Aorta (tissue), 5 donors: ENCODE measurements at regions of chr12 and their contacts with region 1.

Region 1: GRCh38 chr12:110109037-110109836 is 14.9 kb upstream of the IFT81 start:
- DNase-seq: peak; percentile 88 to 89
- ATAC-seq: peak; percentile 92
- H3K4me3 ChIP-seq: no peak overlapping the region
- H3K27ac ChIP-seq: peak overlapping the region; percentile 60 to 98
- H3K4me1 ChIP-seq: peaks cover 0 to 2% of the 10 kb centered on the region in 2 donors
- H3K27me3 ChIP-seq: no peaks in the 10 kb centered on the region

Region 2: DNA sequence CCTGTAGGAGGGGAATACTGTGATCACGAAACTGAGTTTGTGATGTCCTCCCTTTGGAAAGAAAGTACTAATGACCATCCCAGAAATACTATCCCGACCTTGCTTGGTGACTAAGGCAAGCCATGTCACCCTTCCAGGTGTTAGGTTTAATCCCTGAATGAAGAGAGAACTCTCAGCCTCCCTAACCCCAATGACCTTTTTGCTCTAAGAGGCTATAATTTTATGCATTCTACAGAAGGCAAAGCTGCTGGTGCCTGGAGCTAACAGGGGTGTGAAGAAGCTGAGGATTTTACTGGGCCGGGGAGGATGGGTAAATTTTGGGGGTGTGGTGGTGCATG is 53.1 kb before region 1 on chr12:
- intact Hi-C with region 1: no loop called
- DNase-seq: no peak
- ATAC-seq: no peak
- H3K4me3 ChIP-seq: no peak overlapping the region
- H3K27ac ChIP-seq: no peak overlapping the region
- H3K4me1 ChIP-seq: no peaks in the 10 kb centered on the region
- H3K27me3 ChIP-seq: no peaks in the 10 kb centered on the region

Region 3: GRCh38 chr12:110124184-110124995 is 15.2 kb after region 1 on chr12 and contains the start of gene IFT81:
- intact Hi-C with region 1: loop called in 1 of 2 experiments (anchors 2 kb)
- DNase-seq: peak; percentile 97 to 99
- ATAC-seq: peak; percentile 97
- H3K4me3 ChIP-seq: peak within 1 kb of the TSS; percentile 24 to 67
- H3K27ac ChIP-seq: peak within 1 kb of the TSS in 1 of 2 donors; percentile 59
- H3K4me1 ChIP-seq: peaks cover 0 to 2% of the 10 kb centered on the region in 2 donors
- H3K27me3 ChIP-seq: no peaks in the 10 kb centered on the region
- total RNA-seq, gene IFT81: 11.4 to 14.1 TPM

Region 4: GRCh38 chr12:110180591-110181005 is 71.4 kb after region 1 on chr12:
- intact Hi-C with region 1: loop called in 1 of 2 experiments (anchors 5 kb)
- DNase-seq: no peak
- ATAC-seq: peak; percentile 63
- H3K4me3 ChIP-seq: no peak overlapping the region
- H3K27ac ChIP-seq: peak overlapping the region in 1 of 2 donors; percentile 76
- H3K4me1 ChIP-seq: peaks cover 0 to 9% of the 10 kb centered on the region in 2 donors
- H3K27me3 ChIP-seq: no peaks in the 10 kb centered on the region

Region 5: DNA sequence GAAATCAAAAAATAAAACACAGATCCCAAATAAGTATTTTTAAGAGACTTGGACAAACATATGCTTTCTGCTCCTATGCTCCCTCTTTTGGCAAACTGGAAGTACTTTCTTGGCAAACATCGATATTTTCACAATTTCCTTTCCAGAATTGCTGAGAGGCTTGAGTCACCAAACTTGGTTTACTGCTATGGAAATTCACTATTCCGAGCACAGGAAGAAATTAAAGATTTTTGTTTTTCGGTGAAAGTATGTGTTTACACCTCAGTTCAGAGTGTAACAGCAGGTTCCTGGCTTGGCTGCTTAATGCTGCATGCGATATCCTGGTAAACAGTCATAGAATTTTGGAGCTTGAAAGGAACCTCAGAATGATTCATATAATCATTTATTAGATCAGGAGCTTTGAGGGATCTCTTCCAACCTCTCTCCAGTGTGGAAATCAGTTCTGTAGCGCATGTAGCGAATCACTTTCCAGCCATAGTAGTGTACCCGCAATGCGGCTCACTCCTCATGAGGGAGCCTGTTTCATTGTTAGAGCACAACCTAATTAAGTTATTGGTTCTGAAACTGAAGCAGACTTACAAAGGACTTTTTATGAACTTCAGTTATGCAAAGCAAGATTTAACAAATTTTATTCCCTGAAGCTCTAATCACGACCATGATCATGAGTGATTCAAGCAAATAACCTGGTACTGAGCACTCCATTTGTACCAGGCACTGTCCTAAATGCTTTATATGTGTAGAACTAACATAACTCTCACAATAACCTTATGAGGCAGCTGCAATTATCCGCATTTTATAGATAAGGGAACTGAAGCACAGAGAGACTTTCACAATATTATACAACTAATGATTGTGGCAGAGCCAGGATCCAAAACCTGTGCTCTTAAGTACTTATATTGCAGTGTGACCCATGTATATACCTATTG is 115.4 kb after region 1 on chr12:
- intact Hi-C with region 1: loop called in 1 of 2 experiments (anchors 5 kb)
- DNase-seq: no peak
- ATAC-seq: peak; percentile 87
- H3K4me3 ChIP-seq: peak overlapping the region in 1 of 2 donors; percentile 64
- H3K27ac ChIP-seq: peak overlapping the region; percentile 39 to 82
- H3K4me1 ChIP-seq: peaks cover 3 to 9% of the 10 kb centered on the region in 2 donors
- H3K27me3 ChIP-seq: no peaks in the 10 kb centered on the region

Region 6: GRCh38 chr12:110280779-110281548 is 171.7 kb after region 1 on chr12 and contains the start of gene ATP2A2:
- intact Hi-C with region 1: loop called in 1 of 2 experiments (anchors 5 kb)
- DNase-seq: peak; percentile 94 to 95
- ATAC-seq: peak; percentile 97
- H3K4me3 ChIP-seq: peak within 1 kb of the TSS; percentile 83 to 96
- H3K27ac ChIP-seq: peak within 1 kb of the TSS; percentile 96 to 97
- H3K4me1 ChIP-seq: peaks cover 0 to 4% of the 10 kb centered on the region in 2 donors
- H3K27me3 ChIP-seq: no peaks in the 10 kb centered on the region
- total RNA-seq, gene ATP2A2: 231 to 285 TPM